Right ventricle myocardium inferior (tissue), 1 donor: ENCODE measurements at regions of chr17 and their contacts with region 1.

Region 1: GRCh38 chr17:10844621-10845387 is 6.9 kb upstream of the PIRT start:
- DNase-seq: peak; percentile 83
- ATAC-seq: peak; percentile 94

Region 2: DNA sequence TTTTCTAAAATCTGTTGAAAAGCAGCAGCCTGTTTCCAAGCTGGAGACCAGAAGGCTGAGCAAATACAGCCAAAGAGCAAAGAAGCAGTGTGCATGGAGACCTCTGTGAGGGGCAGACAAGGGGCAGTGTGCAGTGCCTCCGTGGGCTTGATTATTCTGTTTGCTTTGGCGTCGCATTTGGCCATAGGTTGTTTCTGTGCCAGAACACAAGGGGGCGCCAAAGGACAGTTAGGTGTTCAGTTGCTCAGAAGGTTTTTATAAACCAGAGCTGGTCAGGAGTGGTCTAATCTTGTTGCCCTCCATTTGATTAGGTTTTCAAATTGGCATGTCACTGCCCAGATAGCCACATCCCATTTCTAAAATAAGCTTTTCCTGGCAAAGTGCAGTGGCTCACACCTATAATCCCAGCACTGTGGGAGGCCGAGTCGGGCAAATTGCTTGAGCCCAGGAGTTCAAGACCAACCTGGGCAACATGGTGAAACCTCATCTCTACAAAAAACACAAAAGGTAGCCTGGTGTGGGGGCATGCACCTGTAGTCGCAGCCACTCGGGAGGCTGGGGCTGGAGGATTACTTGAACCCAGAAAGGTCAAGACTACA is 198.3 kb before region 1 on chr17:
- intact Hi-C with region 1: loop called (anchors 2 kb)
- DNase-seq: no peak
- ATAC-seq: no peak

Region 3: DNA sequence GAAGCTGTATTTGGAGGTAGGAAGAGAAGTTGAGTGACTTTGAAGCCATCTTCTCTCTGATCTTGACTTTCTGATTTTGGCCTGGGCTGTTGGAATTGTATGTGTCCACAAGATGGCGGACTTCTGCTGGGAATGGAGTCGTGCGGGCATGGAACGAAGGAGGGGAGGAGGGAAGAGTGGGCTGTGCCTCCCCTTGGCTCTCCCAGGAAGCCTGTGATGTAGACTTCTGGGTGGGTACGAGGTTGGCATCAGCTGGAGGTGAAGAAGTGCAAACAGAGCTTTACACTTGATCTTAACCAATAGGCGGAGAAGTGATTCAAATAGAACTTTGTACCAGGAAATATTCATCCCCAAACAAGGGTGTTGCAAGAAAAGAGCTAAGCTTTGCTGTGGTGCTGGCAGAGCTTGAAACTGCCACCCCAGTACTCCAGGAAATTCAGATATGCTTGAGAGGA is 107.6 kb before region 1 on chr17:
- intact Hi-C with region 1: loop called (anchors 1 kb)
- DNase-seq: no peak
- ATAC-seq: peak; percentile 80

Region 4: DNA sequence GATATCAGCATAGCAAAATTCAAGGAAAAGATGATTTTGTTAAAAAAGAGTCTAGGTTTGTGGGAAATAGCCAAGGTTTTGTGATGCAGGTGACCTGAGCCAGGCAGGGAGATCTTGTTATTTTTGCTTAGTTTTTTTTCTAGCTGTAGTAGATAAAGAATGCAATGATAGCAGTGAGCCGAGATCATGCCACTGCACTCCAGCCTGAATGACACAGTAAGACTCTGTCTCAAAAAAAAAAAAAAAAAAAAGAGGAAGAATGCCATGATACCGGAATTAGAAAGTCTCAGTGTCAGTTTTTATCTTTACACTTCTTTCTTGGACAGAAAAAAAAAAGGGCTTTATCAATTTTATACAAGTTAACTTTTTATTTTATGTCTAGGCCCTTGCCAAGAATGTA is 68.4 kb before region 1 on chr17:
- intact Hi-C with region 1: loop called (anchors 5 kb)
- DNase-seq: no peak
- ATAC-seq: no peak

Region 5: DNA sequence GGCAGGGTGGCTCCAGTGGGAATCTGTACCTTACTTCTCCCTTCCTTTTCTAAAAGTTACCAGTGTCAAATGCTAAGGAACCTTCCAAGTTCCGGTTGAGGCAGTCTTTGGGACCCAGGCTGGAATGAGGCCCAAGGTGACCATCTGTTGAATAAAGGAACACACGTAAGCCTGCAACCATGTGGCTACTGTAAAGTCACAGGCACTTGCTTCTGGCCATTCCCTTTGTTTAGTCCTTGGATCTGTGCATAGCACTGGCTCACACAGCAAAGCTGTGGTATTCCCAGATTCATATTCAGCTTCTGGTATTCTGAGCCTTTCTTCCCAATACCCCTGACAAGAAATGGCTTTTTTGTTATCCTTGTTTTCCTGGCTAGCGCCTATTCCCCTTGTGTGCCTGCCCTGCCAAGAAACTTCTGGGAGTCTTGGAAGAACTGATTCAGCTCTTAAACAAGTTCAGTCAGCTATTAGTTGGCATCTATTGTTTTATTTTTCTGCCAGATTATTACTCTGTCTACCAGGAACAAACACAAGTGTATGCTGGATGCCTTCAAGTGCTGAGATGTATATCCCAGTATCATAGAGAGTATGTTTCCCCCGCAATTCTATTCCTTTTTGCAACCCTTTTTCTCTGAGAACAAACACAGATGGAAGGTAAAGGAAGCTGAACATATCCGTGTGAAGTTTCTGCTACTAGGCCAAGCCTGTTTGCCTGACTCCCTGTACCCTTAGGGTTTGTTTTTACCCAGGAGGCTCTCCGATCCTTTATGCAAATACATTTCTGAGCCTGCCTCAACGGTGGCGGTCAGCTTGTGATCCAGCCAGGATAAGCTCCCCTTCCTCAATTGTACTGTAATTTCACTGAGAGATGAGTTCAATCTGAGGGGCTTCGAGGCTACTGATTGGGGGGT is 54.1 kb before region 1 on chr17:
- intact Hi-C with region 1: no loop called
- DNase-seq: no peak
- ATAC-seq: peak; percentile 55